PC-9 (cell line): ENCODE measurements at regions of chr1 and their contacts with region 1.

Region 1: GRCh38 chr1:85297855-85298629 is 21.6 kb upstream of the BCL10 start:
- DNase-seq: peak; percentile 75 to 100
- H3K4me3 ChIP-seq: peak overlapping the region; percentile 35; the same call in 1 of the 2 replicates
- H3K27ac ChIP-seq: peak overlapping the region; percentile 93
- H3K4me1 ChIP-seq: peaks cover 62% of the 10 kb centered on the region
- H3K27me3 ChIP-seq: no peaks in the 10 kb centered on the region
- CTCF ChIP-seq: no peak

Region 2: GRCh38 chr1:85200870-85201339 is 97.1 kb before region 1 on chr1 and contains the start of gene SYDE2:
- CTCF ChIA-PET with region 1: no interaction called
- POLR2A ChIA-PET with region 1: no interaction called
- intact Hi-C with region 1: loop called (anchors 1 kb)
- DNase-seq: peak; percentile 72 to 90
- H3K4me3 ChIP-seq: peak within 1 kb of the TSS; percentile 94
- H3K27ac ChIP-seq: peak within 1 kb of the TSS; percentile 84
- H3K4me1 ChIP-seq: peaks cover 62% of the 10 kb centered on the region
- H3K27me3 ChIP-seq: no peaks in the 10 kb centered on the region
- CTCF ChIP-seq: no peak
- total RNA-seq, gene SYDE2: 8.9 and 10.3 TPM in 2 replicates

Region 3: DNA sequence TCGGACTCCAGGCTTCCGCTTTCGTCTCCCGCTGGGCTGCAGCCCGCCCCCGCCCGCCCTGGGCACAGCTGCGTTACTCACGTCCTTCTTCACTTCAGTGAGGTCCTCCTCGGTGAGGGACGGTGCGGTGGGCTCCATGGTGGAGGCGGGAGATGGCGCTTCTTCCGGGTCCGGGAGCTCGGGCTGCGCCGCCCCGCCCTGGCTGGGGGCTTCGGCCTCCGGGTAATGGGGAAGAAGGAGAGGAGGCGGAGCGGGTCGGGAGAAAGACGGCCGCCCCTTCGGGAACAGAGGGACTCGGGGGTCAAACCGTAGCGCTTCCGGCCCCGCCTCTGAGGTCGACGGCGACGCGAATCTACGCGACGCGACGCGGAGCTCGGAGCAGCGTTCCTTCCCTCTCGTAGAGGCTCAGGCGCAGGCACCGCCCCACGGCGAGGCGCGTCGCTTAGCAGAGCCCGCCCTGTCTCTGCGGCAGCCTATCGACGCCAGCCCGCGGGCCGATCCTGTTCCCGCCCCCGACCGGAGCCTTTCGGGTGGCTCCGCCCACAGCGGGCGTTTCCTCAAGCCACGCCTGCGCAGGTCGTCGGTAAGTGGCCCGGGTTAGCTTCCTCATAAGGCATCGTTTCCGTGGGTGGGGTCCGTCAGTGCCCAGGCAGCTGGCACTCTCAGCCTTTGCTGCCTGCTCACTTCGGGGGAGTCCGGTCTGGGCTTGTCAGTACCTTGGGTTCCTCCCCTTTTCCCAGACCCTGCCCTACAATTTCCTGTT is 21.6 kb before region 1 on chr1 and contains the start of gene BCL10:
- CTCF ChIA-PET with region 1: no interaction called
- POLR2A ChIA-PET with region 1: interaction called, 8 read pairs
- intact Hi-C with region 1: loop called (anchors 1 kb)
- DNase-seq: peak; percentile 98 to 99
- H3K4me3 ChIP-seq: peak within 1 kb of the TSS; percentile 92
- H3K27ac ChIP-seq: peak within 1 kb of the TSS; percentile 86
- H3K4me1 ChIP-seq: peaks cover 54% of the 10 kb centered on the region
- H3K27me3 ChIP-seq: no peaks in the 10 kb centered on the region
- CTCF ChIP-seq: no peak
- total RNA-seq, gene BCL10: 30.4 and 32.0 TPM in 2 replicates

Region 4: DNA sequence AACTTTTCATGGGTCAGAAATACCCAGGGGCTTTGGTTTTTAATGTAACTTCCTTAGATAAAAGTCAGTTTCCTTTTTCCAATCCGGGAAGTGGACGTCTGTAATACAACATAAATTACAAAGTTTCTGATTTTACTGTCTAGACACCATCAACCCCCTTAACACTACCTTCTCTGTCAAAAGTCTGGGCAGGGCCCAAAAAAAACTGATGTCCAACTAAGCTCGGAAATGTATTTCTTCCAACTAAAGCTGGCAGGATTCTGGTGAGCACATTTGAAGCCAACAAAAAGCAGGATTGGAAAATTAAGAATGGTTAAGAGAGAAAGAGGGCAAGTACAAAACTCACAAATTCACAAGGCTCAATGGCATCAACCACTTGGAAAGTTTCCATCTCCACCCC is 142.6 kb after region 1 on chr1:
- CTCF ChIA-PET with region 1: no interaction called
- POLR2A ChIA-PET with region 1: no interaction called
- intact Hi-C with region 1: no loop called
- DNase-seq: no peak
- H3K4me3 ChIP-seq: no peak overlapping the region
- H3K27ac ChIP-seq: no peak overlapping the region
- H3K4me1 ChIP-seq: peaks cover 8% of the 10 kb centered on the region
- H3K27me3 ChIP-seq: no peaks in the 10 kb centered on the region
- CTCF ChIP-seq: no peak